Heart right ventricle (tissue), 16 donors: ENCODE measurements at regions of chr12 and their contacts with region 1.

Region 1: DNA sequence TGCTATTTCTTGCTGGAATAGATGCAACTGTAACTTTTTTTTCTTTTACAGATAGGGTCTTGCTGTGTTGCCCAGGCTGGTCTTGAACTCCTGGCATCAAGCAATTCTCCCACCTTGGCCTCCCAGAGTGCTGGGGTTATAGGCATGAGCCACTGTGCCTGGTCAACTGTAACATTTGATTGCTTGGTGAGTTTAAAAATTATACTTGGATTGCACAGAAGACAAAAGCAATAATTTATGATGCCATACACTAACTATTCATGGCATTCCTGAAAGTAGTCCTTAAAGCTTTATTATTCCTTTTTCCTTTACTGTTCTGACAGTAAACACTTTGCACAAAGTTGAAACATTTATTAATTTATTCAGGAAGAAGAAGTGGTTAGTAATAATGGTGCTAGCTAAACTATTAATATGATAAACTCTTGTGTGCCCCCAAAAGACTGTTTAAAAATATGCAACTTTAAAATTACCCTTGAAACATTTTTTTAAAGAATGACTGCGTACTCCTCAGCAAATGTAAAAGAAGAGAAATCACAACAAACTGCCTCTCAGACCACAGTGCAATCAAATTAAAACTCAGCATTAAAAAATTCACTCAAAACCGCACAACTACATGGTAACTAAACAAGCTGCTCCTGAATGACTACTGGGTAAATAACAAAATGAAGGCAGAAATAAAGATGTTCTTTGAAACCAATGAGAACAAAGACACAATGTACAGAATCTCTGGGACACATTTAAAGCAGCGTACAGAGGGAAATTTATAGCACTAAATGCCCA is 8.3 kb downstream of the PTPRB start:
- DNase-seq: no peak
- ATAC-seq: no peak
- H3K4me3 ChIP-seq: peak overlapping the region in 3 of 10 donors; percentile 27 to 35 (median 33)
- H3K27ac ChIP-seq: peak overlapping the region in 6 of 10 donors; percentile 0 to 74 (median 52)
- H3K4me1 ChIP-seq: peaks cover 0 to 23% (median 3%) of the 10 kb centered on the region in 9 donors
- H3K27me3 ChIP-seq: no peaks in the 10 kb centered on the region
- CTCF ChIP-seq: no peak

Region 2: GRCh38 chr12:70590051-70590450 is 38.8 kb before region 1 on chr12:
- intact Hi-C with region 1: loop called in 1 of 10 experiments (anchors 2 kb)
- DNase-seq: peak; percentile 70 to 74
- ATAC-seq: peak in 6 of 8 donors; percentile 85 to 92 (median 88)
- H3K4me3 ChIP-seq: no peak overlapping the region
- H3K27ac ChIP-seq: no peak overlapping the region
- H3K4me1 ChIP-seq: peaks cover 0 to 42% (median 0%) of the 10 kb centered on the region in 9 donors
- H3K27me3 ChIP-seq: no peaks in the 10 kb centered on the region
- CTCF ChIP-seq: peak; percentile 65 to 93 (median 88)

Region 3: DNA sequence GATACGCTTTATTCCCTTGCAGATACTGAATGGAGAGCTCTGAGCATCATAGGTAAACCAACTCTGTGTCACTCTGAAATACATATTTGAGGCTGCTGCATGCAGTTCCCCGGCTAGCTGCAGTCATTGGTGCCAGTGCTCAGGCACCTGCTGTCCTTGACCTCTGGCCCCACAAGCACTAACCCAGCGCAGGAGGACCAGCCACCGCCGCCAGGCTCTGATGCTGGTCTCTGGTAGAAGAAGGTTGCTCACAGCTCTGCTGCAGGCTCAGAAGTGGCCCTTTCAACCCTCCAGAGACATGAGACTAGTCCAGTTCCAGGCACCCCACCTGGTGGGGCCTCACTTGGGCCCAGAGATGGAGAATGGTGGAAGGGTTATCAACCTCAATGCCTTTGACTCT is 42.8 kb after region 1 on chr12:
- intact Hi-C with region 1: no loop called
- DNase-seq: no peak
- ATAC-seq: no peak
- H3K4me3 ChIP-seq: no peak overlapping the region
- H3K27ac ChIP-seq: no peak overlapping the region
- H3K4me1 ChIP-seq: peaks cover 0 to 14% (median 0%) of the 10 kb centered on the region in 9 donors
- H3K27me3 ChIP-seq: no peaks in the 10 kb centered on the region
- CTCF ChIP-seq: no peak

Region 4: GRCh38 chr12:71036526-71036925 is 407.6 kb after region 1 on chr12:
- intact Hi-C with region 1: no loop called
- DNase-seq: no peak
- ATAC-seq: no peak
- H3K4me3 ChIP-seq: no peak overlapping the region
- H3K27ac ChIP-seq: no peak overlapping the region
- H3K4me1 ChIP-seq: no peaks in the 10 kb centered on the region
- H3K27me3 ChIP-seq: no peaks in the 10 kb centered on the region
- CTCF ChIP-seq: no peak